ENCODE measurements at regions of chr1 and their contacts with region 1.

Region 1: DNA sequence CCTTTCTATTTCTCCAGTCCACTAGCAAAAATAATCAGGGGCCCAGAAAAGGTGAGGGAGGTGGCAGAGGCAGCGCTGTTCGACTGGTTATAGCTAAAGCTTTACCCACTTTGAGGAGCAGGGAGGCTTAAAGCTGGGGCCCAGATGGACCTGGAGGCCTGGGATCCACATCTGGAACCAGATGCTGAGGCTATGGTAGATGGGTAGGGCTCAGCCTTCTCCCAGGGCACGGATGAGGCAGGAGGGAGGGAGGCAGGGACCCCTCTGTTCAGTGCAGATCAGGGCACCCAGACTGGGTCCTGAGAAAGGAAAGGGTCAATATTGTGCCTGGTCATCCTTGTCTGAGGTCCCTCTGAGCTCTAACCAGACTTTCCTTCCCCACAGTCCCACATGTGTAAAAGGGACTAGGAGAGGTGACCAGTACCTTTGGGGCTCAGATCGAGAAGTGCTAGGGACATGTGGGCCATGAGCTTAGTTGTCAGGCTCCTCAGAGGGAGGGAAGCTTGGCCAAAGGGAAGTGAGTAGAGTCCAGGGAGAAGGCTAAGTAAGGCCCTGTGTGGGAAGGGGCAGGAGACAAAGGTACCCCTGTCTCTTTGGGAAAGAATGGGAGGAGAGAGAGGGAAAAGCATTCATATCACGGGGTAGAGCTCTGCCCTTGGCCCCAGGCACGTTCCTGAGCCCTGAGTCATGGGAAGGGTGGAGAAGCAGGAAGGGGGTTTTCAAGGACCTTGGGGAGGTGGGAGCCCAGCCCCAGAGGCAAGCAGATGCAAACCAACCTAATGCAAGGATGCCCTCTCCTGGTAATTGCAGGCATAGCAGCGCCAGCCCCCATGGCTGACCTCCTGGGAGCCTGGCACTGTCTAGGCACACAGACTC is 15.4 kb downstream of the LMNA start:
- H3K4me3 ChIP-seq: no peak overlapping the region
- H3K27ac ChIP-seq: peak overlapping the region; percentile 21
- H3K4me1 ChIP-seq: peaks cover 6% of the 10 kb centered on the region
- CTCF ChIP-seq: peak; percentile 93

Region 2: DNA sequence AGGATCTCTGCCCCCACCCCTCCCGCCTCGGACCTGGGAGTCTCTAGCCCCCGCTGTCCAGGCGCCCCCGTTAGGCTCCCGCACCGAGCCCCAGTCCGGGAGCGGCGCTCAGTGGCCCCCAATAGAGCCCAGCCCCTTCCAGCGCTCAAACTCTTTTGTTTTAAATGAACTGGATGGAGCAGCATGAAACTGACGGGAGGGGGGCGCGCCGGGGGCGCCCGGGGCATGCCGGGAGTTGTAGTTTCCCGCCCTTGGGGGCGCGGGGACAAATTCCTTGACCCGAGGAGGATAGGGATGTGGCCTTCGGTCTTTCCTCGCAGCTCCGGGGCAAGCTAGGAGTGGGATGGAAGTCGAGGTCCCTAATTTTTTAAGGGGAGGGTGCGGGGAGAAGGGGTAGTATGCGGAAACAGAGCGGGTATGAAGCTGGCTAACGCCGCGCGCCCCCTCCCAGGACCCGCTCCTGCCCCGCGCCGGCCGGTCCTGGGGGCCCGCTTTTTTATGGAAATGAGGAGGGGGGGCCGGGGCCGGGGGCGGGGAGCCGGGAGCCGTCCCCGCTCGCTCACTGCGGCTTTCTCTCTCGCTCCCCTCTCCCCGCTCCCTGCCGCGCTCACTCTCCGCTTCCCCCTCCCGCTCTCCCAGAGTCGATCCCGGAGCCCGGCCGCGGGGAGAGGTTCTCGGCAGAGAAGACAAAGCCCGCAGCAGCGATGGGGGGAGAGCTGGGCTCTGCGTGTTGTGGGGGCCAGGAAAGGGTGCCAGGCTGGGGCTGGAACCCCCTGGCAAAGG is 47.4 kb before region 1 on chr1 and contains the start of gene MEX3A:
- CTCF ChIA-PET with region 1: interaction called, 20 read pairs
- POLR2A ChIA-PET with region 1: no interaction called
- H3K4me3 ChIP-seq: peak within 1 kb of the TSS; percentile 77
- H3K27ac ChIP-seq: peak within 1 kb of the TSS; percentile 64
- H3K4me1 ChIP-seq: peaks cover 3% of the 10 kb centered on the region; the same call in 1 of the 2 replicates
- CTCF ChIP-seq: no peak; the same call in 1 of the 2 replicates

Measured in HEK293 (cell line).